ENCODE measurements at regions of chr12 and their contacts with region 1.

Region 1: GRCh38 chr12:14723763-14724162 is 27.4 kb upstream of the GUCY2C start:
- DNase-seq: peak; percentile 62
- ATAC-seq: peak; percentile 65
- H3K4me3 ChIP-seq: no peak overlapping the region
- H3K27ac ChIP-seq: no peak overlapping the region
- H3K4me1 ChIP-seq: no peaks in the 10 kb centered on the region
- H3K27me3 ChIP-seq: no peaks in the 10 kb centered on the region
- CTCF ChIP-seq: peak; percentile 68

Region 2: DNA sequence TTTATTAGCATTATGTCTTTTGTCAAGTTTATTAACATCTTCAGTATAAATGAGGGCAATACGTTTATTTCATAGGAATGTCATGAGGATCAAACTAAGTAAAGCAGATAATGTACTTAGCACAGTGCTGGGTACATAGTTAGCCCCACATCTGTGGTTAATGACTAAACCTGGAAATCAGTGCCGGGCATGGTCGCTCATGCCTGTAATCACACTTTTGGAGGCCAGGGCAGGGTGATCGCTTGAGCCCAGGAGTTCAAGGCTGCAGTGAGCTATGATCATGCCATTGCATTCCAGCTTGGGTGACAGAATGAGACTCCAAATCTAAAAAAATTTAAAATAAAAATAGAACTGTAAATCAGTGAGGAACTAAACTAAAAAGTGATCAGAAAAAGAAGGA is 17.4 kb after region 1 on chr12:
- CTCF ChIA-PET with region 1: no interaction called
- POLR2A ChIA-PET with region 1: no interaction called
- intact Hi-C with region 1: no loop called
- DNase-seq: no peak
- ATAC-seq: no peak
- H3K4me3 ChIP-seq: no peak overlapping the region
- H3K27ac ChIP-seq: no peak overlapping the region
- H3K4me1 ChIP-seq: no peaks in the 10 kb centered on the region
- H3K27me3 ChIP-seq: no peaks in the 10 kb centered on the region
- CTCF ChIP-seq: no peak

Region 3: DNA sequence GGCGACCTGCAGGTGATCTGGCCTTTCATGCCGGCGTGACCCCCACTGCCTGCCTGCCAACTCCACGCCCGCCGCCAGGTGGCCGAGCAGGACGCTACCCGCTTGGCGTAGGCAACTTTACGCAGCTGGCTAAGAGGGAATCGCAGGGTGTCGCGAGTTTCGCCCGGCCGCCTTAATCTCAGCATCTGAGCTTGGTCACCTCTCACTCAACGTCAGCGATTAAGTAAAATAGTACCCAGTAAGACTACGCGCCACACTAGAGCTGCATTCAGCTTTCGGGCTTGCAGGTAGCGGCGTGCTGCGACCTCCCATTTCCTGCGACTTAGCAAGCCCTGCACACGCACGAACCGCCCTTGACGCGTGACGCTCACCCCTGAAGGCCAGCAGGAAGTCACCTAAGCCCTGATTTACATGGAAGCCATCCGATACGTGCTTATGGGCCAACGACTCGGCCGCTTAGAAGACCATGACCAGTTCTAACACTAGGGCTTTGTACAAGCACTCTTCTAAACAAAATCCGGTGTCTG is 46.3 kb after region 1 on chr12:
- CTCF ChIA-PET with region 1: no interaction called
- POLR2A ChIA-PET with region 1: no interaction called
- intact Hi-C with region 1: loop called (anchors 2 kb)
- DNase-seq: peak; percentile 70
- ATAC-seq: peak; percentile 33
- H3K4me3 ChIP-seq: peak overlapping the region; percentile 97
- H3K27ac ChIP-seq: peak overlapping the region; percentile 74
- H3K4me1 ChIP-seq: peaks cover 22% of the 10 kb centered on the region
- H3K27me3 ChIP-seq: no peaks in the 10 kb centered on the region
- CTCF ChIP-seq: peak; percentile 67